Right lobe of liver (tissue), 6 donors: ENCODE measurements at regions of chr19 and their contacts with region 1.

Region 1: GRCh38 chr19:11578258-11579142 is 1.1 kb upstream of the ACP5 start:
- DNase-seq: peak; percentile 71 to 75 (median 74)
- ATAC-seq: peak; percentile 66 to 71 (median 67)
- H3K4me3 ChIP-seq: peak overlapping the region; percentile 21 to 47 (median 39)
- H3K27ac ChIP-seq: peak overlapping the region in 2 of 3 donors; percentile 33 to 44
- H3K4me1 ChIP-seq: peaks cover 0 to 5% (median 0%) of the 10 kb centered on the region in 4 donors
- H3K27me3 ChIP-seq: no peaks in the 10 kb centered on the region
- CTCF ChIP-seq: no peak
- POLR2A ChIP-seq: no peak

Region 2: DNA sequence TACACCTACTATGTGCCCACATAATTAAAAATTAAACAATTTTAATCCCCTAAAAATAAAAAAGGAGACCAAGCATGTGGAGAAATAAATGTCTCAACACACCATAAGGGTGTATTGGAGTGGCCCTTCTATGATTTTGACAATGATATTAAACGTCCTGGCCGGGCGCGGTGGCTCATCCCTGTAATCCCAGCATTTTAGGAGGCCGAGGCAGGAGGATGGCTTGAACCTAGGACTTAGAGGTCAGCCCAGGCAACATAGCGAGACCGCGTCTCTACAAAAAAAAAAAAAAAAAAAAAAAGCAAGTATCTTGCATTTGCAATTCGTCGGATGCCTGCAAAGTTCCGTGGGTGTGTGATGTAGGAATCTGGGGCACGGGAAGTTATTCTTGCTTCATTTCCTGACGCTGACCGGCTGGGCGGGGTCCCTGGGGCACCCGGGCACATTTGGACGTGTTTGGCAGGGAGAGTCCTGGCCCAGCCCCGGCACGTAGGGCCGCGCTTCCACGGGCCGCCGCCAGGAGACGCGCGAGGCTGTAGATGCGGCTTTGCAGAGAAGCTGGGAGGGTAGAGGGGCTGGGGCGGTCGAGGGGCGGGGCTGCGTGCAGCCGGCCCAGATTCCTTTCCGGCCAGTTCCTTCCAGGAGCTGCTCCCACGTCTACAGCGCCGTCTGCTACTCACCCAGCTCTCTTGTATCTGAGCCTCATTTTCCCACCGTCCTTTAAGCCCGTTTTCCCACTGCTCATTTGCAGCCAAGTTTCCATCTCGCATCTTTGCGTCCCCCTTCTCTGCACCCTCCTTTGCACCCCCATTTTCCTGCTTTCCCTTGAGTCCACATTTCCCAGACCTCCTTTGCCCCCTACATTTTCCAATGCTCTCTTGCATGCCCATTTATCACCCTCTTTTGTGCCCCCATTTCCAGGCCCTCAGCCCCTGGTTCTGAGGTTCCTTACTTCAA is 284.8 kb before region 1 on chr19:
- intact Hi-C with region 1: loop called in 1 of 2 experiments (anchors 10 kb)
- DNase-seq: peak; percentile 94 to 95 (median 94)
- ATAC-seq: peak; percentile 99 to 100 (median 99)
- H3K4me3 ChIP-seq: no peak overlapping the region
- H3K27ac ChIP-seq: no peak overlapping the region
- H3K4me1 ChIP-seq: peaks cover 0 to 5% (median 0%) of the 10 kb centered on the region in 4 donors
- H3K27me3 ChIP-seq: no peaks in the 10 kb centered on the region
- CTCF ChIP-seq: peak; percentile 96 to 99 (median 98)
- POLR2A ChIP-seq: no peak